Activated naive CD4-positive, alpha-beta T cell treated with anti-CD3 and anti-CD28 coated beads, Interleukin-2, amount 10 ng/mL, durations not matched to agents 7 days and 5 days (primary cell): ENCODE measurements at regions of chr2 and their contacts with region 1.

Region 1: DNA sequence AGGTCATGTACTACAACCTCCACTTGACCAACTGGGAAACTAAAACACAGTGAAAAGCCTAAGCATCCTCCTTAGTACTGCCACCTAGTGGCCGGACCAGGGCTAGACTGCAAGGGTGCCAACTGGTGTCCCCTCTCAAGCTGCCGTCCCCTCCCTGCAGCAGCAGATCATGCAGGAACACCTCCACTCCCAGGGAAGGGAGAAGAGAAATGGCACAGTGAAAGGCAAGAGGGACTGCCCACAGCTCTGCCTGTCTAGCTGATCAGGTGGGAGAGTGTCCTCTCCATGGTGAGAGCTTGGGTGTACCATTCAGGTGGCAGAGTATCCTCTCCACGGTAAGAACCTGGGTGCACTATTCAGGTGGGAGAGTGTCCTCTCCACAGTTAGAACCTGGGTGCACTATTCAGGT is 78.1 kb downstream of the AAK1 start:
- DNase-seq: peak; percentile 79
- H3K4me3 Mint-ChIP-seq: no peak overlapping the region
- H3K27ac Mint-ChIP-seq: no peak overlapping the region
- H3K4me1 Mint-ChIP-seq: peaks cover 56% of the 10 kb centered on the region
- H3K27me3 Mint-ChIP-seq: no peaks in the 10 kb centered on the region

Region 2: DNA sequence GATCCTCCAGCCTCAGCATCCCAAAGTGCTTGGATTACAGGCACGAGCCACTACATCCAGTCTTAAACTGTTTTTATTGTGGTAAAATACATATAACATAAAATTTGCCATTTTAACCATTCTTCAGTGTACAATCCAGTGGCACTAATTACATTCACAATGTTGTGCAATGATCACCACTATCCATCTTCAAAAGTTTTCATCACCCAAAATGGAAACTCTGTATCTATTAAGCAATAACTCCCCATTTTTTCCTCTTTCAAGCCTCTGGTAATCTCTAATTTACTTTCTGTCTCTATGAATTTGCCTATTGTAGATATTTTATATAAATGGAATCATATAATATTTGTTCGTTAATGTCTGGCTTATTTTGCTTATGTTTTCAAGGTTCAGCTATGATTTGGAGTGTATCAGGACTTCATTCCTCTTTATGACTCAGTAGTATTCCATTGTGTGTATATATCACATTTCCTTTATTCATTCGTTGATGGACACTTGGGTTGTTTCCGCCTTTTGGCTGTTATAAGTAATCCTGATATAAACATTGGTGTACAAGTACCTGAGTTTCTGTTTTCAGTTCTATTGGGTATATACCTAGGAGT is 250.2 kb before region 1 on chr2:
- CTCF ChIA-PET with region 1: no interaction called
- DNase-seq: no peak
- H3K4me3 Mint-ChIP-seq: no peak overlapping the region
- H3K27ac Mint-ChIP-seq: no peak overlapping the region
- H3K4me1 Mint-ChIP-seq: peaks cover 12% of the 10 kb centered on the region
- H3K27me3 Mint-ChIP-seq: peaks cover 4% of the 10 kb centered on the region

Region 3: DNA sequence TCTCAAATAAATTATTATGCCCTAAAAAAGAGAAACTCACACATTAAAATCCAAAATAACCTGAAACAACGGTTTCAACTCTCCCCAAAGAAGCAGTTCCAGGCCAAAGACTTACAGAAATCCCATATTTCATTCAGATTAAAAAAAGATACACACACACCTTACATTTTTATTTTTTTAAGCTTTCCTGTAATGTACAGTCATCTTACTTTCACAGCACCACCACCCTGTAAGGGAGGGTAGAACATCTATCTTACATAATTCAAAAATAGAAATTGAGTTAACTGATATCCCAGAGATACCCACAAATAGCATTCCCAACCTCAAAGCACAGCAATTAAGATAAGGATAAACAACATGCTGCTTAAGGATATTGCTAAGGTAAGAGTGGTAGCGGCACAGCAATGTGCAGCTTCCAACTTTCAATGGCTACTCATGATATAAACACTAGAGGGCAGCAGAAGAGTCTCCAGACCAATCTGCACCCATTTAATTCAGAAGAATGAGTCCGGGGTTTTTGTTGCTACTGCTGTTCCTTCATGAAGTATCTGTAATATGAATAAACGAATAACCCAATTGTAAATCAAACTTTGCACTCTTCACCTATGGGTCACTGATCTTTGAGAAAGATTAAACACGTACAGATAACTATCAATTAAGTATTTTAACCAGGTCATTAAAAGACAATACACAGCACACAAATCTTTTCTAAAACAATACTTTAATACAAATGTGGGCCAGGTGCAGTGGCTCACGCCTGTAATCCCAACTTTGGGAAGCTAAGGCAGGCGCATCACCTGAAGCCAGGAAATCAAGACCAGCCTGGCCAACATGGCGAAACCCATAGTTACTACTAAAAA is 189.7 kb before region 1 on chr2:
- CTCF ChIA-PET with region 1: interaction called, 16 read pairs
- DNase-seq: no peak
- H3K4me3 Mint-ChIP-seq: no peak overlapping the region
- H3K27ac Mint-ChIP-seq: no peak overlapping the region
- H3K4me1 Mint-ChIP-seq: peaks cover 12% of the 10 kb centered on the region
- H3K27me3 Mint-ChIP-seq: no peaks in the 10 kb centered on the region

Region 4: DNA sequence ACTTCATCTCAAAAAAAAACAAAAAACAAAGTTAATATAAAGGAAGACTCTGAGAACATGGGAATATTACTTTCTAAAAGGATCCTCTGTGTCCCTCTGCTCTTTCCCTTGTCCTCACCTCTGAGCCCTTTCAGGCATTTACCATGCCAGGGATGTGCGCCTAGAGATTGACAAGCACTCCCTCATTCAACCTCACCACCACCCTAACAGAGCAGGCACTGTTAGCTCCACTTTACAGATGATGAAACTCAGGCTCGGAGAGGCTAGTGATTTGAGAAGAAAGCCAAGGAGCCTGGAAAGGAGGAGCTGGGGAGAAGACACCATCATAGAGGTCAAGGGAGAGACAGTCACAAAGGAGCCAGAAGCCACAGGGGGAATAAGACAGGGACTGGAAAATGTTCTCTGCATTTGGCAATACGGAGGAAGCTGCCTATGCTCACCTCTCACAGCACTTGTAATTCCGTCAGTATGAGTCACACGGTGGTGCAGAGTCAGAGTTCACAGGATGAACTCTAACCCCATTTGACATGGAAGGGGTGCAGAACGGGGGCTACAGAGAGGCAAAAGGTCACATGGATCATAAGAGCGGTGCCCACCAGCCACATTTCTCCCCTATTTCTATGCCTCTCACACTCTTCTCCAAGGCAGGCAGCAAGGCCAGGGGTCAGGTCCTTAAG is 26.4 kb before region 1 on chr2:
- CTCF ChIA-PET with region 1: interaction called, 10 read pairs
- DNase-seq: no peak
- H3K4me3 Mint-ChIP-seq: no peak overlapping the region
- H3K27ac Mint-ChIP-seq: no peak overlapping the region
- H3K4me1 Mint-ChIP-seq: peaks cover 12% of the 10 kb centered on the region
- H3K27me3 Mint-ChIP-seq: no peaks in the 10 kb centered on the region

Region 5: DNA sequence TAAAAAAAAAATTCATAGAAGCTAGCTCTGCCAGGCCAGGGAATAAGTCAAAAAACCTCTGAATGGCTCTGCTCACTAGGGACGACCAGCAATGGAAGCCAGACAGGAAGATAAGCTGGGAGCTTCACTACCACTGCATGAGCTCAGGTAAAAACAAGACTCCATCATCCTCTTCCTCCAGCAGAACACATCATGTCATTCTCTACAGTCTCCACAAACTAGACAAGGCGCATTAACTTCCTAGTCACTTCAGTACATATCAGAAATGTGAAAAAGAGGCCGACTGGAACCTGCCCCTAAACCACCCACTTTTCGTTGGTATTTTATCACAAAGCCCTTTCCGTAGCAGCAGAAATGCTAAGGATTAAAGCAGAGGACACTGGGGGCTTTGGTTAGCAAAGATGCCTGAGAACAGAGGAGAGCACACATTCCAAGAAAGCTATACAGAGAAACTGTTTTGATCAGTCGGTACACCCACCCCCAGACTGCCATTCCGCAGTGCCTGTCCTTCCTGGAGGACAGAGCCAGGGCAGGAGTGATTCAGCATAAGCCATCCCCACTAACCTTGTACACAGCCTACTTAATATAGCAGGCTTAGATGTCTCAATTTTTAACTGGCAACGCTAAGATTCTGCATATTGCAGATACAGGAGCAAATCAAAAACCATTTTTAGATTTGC is 24.7 kb after region 1 on chr2:
- CTCF ChIA-PET with region 1: interaction called, 92 read pairs
- DNase-seq: no peak
- H3K4me3 Mint-ChIP-seq: no peak overlapping the region
- H3K27ac Mint-ChIP-seq: no peak overlapping the region
- H3K4me1 Mint-ChIP-seq: peaks cover 65% of the 10 kb centered on the region
- H3K27me3 Mint-ChIP-seq: no peaks in the 10 kb centered on the region

Region 6: GRCh38 chr2:69628325-69629021 is 63.0 kb after region 1 on chr2:
- CTCF ChIA-PET with region 1: interaction called, 15 read pairs
- DNase-seq: no peak
- H3K4me3 Mint-ChIP-seq: no peak overlapping the region
- H3K27ac Mint-ChIP-seq: no peak overlapping the region
- H3K4me1 Mint-ChIP-seq: peaks cover 25% of the 10 kb centered on the region
- H3K27me3 Mint-ChIP-seq: no peaks in the 10 kb centered on the region

Region 7: GRCh38 chr2:69698383-69698782 is 132.9 kb after region 1 on chr2:
- CTCF ChIA-PET with region 1: interaction called, 11 read pairs
- DNase-seq: no peak
- H3K4me3 Mint-ChIP-seq: no peak overlapping the region
- H3K27ac Mint-ChIP-seq: no peak overlapping the region
- H3K4me1 Mint-ChIP-seq: peaks cover 56% of the 10 kb centered on the region
- H3K27me3 Mint-ChIP-seq: peaks cover 9% of the 10 kb centered on the region

Region 8: GRCh38 chr2:69724540-69725159 is 159.2 kb after region 1 on chr2:
- CTCF ChIA-PET with region 1: interaction called, 20 read pairs
- DNase-seq: peak; percentile 90
- H3K4me3 Mint-ChIP-seq: peak overlapping the region; percentile 35
- H3K27ac Mint-ChIP-seq: no peak overlapping the region
- H3K4me1 Mint-ChIP-seq: peaks cover 7% of the 10 kb centered on the region
- H3K27me3 Mint-ChIP-seq: peaks cover 14% of the 10 kb centered on the region